ENCODE measurements at regions of chr5 and their contacts with region 1.

Region 1: DNA sequence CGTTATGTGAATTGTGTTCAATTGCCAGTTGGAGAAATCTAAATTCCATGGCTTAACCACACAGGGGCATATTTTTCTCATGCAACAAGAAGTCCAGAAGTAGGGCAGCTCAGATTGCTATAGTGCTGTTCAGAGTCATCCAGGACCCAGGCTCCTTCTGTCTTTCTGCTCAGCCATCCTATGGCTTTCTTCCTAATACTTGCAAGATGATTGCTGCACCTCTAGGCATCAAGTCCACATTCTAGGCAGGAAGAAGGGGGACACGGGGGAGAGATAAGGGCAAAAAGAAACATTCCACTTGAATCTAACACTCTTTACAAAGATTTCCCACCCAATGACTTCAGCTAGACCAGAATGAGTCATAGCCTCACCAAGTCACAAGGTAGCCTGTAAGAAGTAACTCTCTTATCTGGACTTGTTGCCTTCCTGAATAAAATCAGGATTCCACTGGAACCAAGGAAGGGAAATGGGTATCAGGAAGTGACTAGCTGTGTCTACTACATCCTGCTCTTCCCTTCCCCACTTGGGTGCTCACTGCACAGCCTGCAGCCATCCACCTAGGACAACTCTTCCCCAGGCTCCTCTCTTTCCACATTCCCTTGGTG is 5.3 kb downstream of the ERAP2 start:
- DNase-seq: peak in 1 of 2 experiments; percentile 62
- H3K4me3 ChIP-seq: no peak overlapping the region
- H3K27ac ChIP-seq: peak overlapping the region; percentile 58
- H3K4me1 ChIP-seq: peaks cover 30% of the 10 kb centered on the region
- H3K27me3 ChIP-seq: no peaks in the 10 kb centered on the region
- CTCF ChIP-seq: no peak

Region 2: DNA sequence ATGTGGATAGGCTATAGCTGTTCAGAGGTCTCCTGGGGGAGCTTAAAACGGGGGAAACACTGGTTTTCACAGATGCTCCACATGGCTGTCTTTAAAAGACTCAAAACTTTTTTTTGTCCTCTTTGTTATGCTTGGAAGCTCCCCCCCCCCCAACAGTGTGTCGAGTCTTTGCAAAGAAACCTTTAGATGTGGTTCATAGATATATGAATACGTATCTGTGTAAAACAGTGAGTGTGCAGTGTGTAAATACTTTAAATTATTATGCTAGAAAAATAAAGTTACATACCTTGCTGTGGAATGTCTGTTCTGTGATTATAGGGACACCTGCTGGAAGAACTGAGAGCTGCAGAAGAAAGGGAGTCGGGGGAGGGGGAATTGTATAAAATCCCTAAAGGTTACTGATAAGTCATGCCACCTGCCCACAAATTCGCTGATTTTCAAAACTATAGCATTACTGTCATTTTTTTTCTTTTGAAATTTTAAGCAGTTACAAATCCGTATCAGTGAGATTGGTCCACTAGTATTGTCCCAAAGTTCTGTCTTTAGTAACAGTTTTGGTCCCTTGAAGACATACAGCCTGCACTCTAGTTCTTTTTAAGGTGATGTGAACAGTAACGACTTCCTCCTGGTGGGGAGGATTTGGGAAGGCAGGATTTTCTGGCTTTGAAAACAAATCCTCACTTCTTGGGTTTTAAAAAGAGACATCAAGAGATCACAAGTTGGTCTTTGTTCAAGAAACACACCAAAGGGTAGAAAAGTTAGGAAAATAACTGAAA is 1914.8 kb after region 1 on chr5:
- CTCF ChIA-PET with region 1: interaction called, 14 read pairs
- POLR2A ChIA-PET with region 1: no interaction called
- intact Hi-C with region 1: no loop called
- DNase-seq: peak; percentile 49 to 62
- H3K4me3 ChIP-seq: no peak overlapping the region
- H3K27ac ChIP-seq: no peak overlapping the region
- H3K4me1 ChIP-seq: 0 out of 2 replicates have a peak, but pooled peaks cover 3% of the 10 kb centered on the region
- H3K27me3 ChIP-seq: no peaks in the 10 kb centered on the region
- CTCF ChIP-seq: peak; percentile 86